Right ventricle myocardium inferior (tissue), 1 donor: ENCODE measurements at regions of chr14 and their contacts with region 1.

Region 1: DNA sequence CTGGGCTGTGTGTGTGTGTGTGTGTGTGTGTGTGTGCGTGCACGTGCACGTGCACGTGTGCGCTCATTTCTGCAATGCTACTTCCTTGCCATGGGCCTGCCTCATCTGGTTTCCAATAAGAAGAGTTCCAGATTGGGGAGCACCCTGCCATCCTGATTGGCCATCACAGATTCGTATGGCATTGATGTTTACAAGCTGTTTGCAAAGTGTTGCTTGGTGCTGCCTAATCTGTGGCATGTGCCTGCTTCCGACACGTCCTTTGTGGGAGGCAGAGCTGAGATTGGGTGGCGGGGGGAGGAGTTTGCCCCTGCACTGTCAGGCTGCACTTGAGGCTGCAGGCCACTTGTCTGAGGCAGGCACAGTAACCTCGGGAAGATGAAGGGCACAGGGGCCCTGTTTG is 39.2 kb downstream of the SAMD4A start:
- DNase-seq: peak; percentile 78
- ATAC-seq: peak; percentile 96

Region 2: DNA sequence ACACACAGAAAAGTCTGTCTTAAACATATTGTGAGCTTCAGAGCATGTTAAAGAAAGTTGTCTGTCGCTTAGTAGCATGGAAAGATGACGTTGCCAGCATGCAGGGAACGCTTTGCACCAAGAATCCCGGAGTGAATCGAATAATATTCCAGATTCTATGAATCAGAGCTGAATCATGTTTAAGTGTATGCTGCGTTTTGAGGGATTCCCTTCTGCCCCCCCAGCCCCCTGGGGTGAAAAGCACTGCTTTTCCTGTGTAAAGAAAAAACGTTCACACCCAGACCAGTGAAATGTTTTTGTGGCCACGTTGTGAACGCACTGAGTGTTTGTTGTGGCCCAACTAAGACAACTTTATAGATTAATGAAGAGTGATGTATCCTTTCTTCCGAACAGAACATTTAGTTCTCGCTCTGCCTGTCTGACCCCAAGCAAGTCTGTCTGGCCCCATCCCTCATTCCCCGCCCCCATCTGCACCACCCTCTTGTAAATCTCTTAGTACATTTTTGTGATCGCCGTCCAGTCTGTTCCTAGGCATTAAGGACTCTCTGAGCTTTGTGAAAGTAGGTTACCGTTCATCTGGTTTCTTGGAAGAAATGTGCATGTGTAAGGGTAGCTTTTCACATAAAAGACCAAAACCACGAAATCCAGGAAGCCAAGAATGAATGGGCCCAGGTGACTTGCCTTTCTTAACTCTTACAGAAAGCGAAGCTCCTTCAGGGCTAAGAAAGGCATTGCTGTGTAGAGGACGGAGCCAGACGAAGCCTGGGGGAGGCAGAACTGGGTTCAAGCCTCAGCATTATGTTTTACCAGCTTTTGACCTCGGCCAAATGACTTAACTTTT is 63.8 kb after region 1 on chr14:
- intact Hi-C with region 1: loop called (anchors 2 kb)
- DNase-seq: no peak
- ATAC-seq: peak; percentile 7

Region 3: GRCh38 chr14:54784657-54785056 is 178.5 kb after region 1 on chr14:
- intact Hi-C with region 1: loop called (anchors 1 kb)
- DNase-seq: peak; percentile 72
- ATAC-seq: peak; percentile 80

Region 4: GRCh38 chr14:54845641-54846040 is 239.5 kb after region 1 on chr14:
- intact Hi-C with region 1: no loop called
- DNase-seq: no peak
- ATAC-seq: no peak